Prostate gland (tissue), 2 donors: ENCODE measurements at regions of chr12 and their contacts with region 1.

Region 1: GRCh38 chr12:21831791-21832344 is 57.4 kb upstream of the KCNJ8 start:
- DNase-seq: no peak
- H3K4me3 ChIP-seq: no peak overlapping the region
- H3K27ac ChIP-seq: peak overlapping the region; percentile 44 to 58
- H3K4me1 ChIP-seq: no peaks in the 10 kb centered on the region
- H3K27me3 ChIP-seq: no peaks in the 10 kb centered on the region
- CTCF ChIP-seq: no peak
- POLR2A ChIP-seq: no peak

Region 2: DNA sequence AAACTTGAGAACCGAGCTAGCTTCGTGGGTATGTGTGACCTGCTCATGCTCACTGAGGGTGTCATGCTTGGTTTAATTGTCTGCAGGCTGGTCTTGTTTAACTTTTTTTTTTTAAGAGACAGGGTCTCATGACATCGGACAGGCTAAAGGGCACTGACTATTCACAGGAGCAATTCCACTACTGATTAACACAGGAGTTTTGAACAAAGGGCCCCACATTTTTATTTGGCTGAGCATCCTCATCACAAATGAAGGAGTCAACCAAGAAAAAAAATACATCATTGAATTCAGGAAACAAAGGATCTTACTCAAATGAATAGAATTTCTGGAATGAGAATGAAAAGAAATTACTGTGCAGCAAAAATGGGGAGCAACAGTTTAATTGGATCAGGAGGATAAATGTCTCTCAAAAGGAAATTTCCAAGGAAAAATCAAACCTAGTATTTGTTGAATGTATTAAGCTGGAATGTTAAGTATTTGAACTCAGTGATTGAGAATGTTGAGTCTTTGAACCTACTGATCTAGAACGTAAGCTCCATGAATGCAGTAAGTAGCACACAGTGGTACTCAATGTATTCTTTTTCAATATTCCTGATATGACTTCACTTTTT is 415.3 kb before region 1 on chr12:
- intact Hi-C with region 1: no loop called
- DNase-seq: no peak
- H3K4me3 ChIP-seq: no peak overlapping the region
- H3K27ac ChIP-seq: no peak overlapping the region
- H3K4me1 ChIP-seq: no peaks in the 10 kb centered on the region
- H3K27me3 ChIP-seq: no peaks in the 10 kb centered on the region
- CTCF ChIP-seq: no peak
- POLR2A ChIP-seq: no peak

Region 3: DNA sequence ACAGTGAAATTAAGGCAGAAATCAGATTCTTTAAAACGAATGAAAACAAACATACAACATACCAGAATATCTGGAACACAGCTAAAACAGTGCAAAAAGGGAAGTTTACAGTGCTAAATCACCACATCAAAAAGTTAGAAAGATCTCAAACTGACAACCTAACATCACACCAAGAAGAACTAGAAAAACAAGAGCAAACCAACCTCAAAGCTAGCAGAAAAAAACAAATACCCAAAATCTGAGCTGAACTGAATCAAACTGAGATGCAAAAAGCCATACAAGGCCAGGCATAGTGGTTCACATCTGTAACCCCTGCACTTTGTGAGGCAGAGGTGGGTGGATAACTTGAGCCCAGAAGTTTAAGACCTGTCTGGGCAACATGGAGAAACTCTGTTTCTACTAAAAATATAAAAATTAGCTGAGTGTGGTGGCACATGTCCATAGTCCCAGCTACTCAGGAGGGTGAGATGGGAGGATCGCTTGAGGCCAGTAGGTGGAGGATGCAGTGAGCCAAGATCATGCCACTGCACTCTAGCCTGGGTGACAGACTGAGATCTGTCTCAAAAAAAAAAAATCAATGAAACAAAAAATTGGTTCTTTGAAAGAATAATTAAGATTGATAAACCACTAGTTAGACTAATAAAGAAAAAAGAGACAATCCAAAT is 141.0 kb before region 1 on chr12:
- intact Hi-C with region 1: no loop called
- DNase-seq: no peak
- H3K4me3 ChIP-seq: no peak overlapping the region
- H3K27ac ChIP-seq: no peak overlapping the region
- H3K4me1 ChIP-seq: no peaks in the 10 kb centered on the region
- H3K27me3 ChIP-seq: no peaks in the 10 kb centered on the region
- CTCF ChIP-seq: no peak
- POLR2A ChIP-seq: no peak

Region 4: GRCh38 chr12:21774358-21775132 is 57.3 kb before region 1 on chr12 and contains the start of gene KCNJ8:
- intact Hi-C with region 1: loop called (anchors 2 kb)
- DNase-seq: peak; percentile 14
- H3K4me3 ChIP-seq: peak within 1 kb of the TSS; percentile 42 to 45
- H3K27ac ChIP-seq: peak within 1 kb of the TSS; percentile 51 to 76
- H3K4me1 ChIP-seq: no peaks in the 10 kb centered on the region
- H3K27me3 ChIP-seq: no peaks in the 10 kb centered on the region
- CTCF ChIP-seq: no peak
- POLR2A ChIP-seq: no peak
- total RNA-seq, gene KCNJ8: 9.2 to 10.3 TPM

Region 5: GRCh38 chr12:21865846-21866245 is 34.0 kb after region 1 on chr12:
- intact Hi-C with region 1: no loop called
- DNase-seq: no peak
- H3K4me3 ChIP-seq: no peak overlapping the region
- H3K27ac ChIP-seq: no peak overlapping the region
- H3K4me1 ChIP-seq: no peaks in the 10 kb centered on the region
- H3K27me3 ChIP-seq: no peaks in the 10 kb centered on the region
- CTCF ChIP-seq: no peak
- POLR2A ChIP-seq: no peak

Region 6: DNA sequence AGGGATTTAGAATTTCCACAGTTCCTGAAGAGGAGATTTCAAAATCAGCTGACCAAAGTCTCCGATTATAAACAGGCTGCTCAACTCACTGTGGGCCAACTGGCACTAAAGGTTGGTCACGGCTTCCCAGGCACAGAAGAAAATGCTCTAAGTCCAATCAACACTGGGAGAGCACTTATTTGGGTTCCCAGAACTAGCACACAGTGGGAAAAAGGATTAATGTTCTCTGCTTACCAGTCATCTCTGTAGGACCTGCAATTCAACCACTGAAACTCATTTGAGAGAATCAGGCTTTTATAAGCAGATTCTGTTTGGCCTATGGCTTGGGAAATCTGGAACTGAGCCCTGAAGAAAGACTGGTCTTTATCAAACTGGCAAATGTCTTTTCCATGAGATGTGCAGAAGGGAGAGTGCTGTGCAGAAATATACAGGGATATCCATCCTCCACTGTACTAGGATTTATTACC is 59.9 kb after region 1 on chr12:
- intact Hi-C with region 1: loop called (anchors 5 kb)
- DNase-seq: no peak
- H3K4me3 ChIP-seq: no peak overlapping the region
- H3K27ac ChIP-seq: peak overlapping the region; percentile 0 to 1
- H3K4me1 ChIP-seq: no peaks in the 10 kb centered on the region
- H3K27me3 ChIP-seq: no peaks in the 10 kb centered on the region
- CTCF ChIP-seq: no peak
- POLR2A ChIP-seq: no peak